CD4-positive, alpha-beta T cell (primary cell): ENCODE measurements at regions of chr11 and their contacts with region 1.

Region 1: DNA sequence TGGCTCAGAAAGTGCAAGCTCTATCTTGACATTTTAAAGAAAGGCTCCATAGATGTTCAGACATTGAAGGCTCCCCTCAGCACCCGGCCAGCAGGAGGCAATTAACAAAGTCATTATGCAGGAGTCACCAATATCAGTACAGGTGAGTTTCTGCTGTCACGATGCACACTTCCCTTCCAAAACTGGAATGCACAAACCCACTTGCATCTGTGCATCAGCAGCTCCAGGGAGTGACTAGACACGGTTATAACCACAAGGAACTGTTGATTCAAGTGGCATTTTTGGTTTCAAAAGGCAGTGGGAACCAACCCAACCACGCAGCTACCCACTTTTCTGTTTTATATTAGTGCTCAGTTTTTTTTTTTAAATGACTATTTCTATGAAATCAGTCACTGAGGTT is 293.9 kb upstream of the NARS2 start:
- DNase-seq: no peak
- ATAC-seq: no peak
- H3K4me3 ChIP-seq: no peak overlapping the region
- H3K4me3 Mint-ChIP-seq: no peak overlapping the region
- H3K27ac ChIP-seq: no peak overlapping the region
- H3K27ac Mint-ChIP-seq: no peak overlapping the region
- H3K4me1 ChIP-seq: no peaks in the 10 kb centered on the region
- H3K4me1 Mint-ChIP-seq: no peaks in the 10 kb centered on the region
- H3K27me3 ChIP-seq: no peaks in the 10 kb centered on the region
- H3K27me3 Mint-ChIP-seq: peaks cover 20% of the 10 kb centered on the region
- CTCF ChIP-seq: no peak

Region 2: DNA sequence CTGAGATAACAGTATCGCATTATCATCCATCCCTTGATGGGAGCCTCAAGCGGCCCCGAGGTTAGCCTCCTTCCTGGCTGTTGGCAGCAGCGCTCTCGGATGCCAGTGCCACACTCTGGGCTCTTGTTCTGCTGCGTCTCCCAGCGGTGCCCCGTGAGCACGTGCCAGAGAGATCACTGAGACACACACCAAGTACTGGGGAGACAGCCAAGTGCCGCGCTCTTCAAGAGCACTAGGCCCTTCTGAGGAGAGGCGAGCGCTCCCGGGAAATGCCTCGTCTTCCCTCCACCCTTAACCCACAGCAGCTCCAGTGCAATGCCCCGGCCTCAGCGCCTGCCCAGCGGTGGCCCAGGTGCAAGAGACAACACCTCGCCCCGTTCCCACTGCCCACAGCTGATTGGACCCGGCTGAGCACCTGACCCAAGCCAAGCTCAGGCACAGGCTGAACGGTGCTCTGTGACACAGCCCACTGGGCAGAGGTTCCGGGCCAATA is 45.6 kb before region 1 on chr11:
- CTCF ChIA-PET with region 1: no interaction called
- POLR2A ChIA-PET with region 1: no interaction called
- intact Hi-C with region 1: no loop called
- DNase-seq: no peak
- ATAC-seq: no peak
- H3K4me3 ChIP-seq: no peak overlapping the region
- H3K4me3 Mint-ChIP-seq: no peak overlapping the region
- H3K27ac ChIP-seq: no peak overlapping the region
- H3K27ac Mint-ChIP-seq: no peak overlapping the region
- H3K4me1 ChIP-seq: no peaks in the 10 kb centered on the region
- H3K4me1 Mint-ChIP-seq: no peaks in the 10 kb centered on the region
- H3K27me3 ChIP-seq: no peaks in the 10 kb centered on the region
- H3K27me3 Mint-ChIP-seq: peaks cover 10% of the 10 kb centered on the region
- CTCF ChIP-seq: no peak

Region 3: GRCh38 chr11:78889698-78890097 is 21.1 kb after region 1 on chr11:
- CTCF ChIA-PET with region 1: no interaction called
- POLR2A ChIA-PET with region 1: no interaction called
- intact Hi-C with region 1: loop called in 1 of 2 experiments (anchors 1 kb)
- DNase-seq: no peak
- ATAC-seq: no peak
- H3K4me3 ChIP-seq: no peak overlapping the region
- H3K4me3 Mint-ChIP-seq: no peak overlapping the region
- H3K27ac ChIP-seq: no peak overlapping the region
- H3K27ac Mint-ChIP-seq: no peak overlapping the region
- H3K4me1 ChIP-seq: no peaks in the 10 kb centered on the region
- H3K4me1 Mint-ChIP-seq: no peaks in the 10 kb centered on the region
- H3K27me3 ChIP-seq: peaks cover 0 to 2% of the 10 kb centered on the region in 2 experiments
- H3K27me3 Mint-ChIP-seq: peaks cover 17% of the 10 kb centered on the region
- CTCF ChIP-seq: no peak